ENCODE measurements at regions of chr4 and their contacts with region 1.

Region 1: DNA sequence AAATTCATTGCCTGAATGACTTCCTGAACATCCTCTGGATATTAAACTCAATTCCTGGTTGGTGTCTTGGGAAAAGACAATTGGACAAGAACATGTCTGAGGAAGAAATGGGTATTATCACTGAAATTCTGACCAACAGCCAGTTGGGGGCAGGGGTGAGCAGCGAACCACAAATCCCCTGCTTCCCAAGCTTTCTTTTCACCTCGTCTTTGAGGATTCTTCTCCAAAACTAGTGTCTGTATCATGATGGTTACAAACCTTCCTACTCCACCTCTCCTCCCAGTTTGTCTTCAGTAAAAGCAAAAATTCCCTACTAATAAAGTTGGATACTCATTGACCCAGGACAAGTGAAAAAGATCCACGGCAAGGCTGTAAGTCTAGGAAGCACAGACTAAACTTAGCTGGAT is 48.3 kb upstream of the WDR1 start:
- ATAC-seq: peak in 3 of 8 experiments; percentile 50 to 58 (median 53)
- H3K4me3 ChIP-seq: no peak overlapping the region
- H3K27ac ChIP-seq: no peak overlapping the region
- H3K4me1 ChIP-seq: no peaks in the 10 kb centered on the region

Region 2: DNA sequence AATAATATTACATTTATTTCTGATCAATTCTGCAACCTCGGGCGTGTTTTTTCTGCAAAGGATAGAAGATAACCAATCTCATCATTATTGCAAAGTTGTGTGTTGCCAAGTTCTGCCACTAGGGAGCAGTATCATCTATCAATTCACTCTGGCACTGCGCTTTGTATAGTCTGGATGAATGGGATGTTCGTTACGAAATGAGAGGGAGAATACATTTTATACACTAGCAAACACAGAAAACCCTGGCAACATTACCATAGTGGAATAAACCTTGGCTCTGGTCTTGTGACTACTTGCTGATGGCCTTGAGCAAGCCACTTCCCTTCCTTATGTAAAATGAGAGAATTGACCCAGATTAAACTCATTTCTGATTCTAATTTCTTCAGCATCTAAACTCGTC is 389.8 kb after region 1 on chr4:
- in situ Hi-C with region 1: loop called in 5 of 9 experiments (anchors 10 to 25 kb)
- ATAC-seq: peak; percentile 84 to 99 (median 96)
- H3K4me3 ChIP-seq: no peak overlapping the region
- H3K27ac ChIP-seq: no peak overlapping the region
- H3K4me1 ChIP-seq: peaks cover 0 to 2% of the 10 kb centered on the region in 2 donors

Measured in motor neuron (in vitro differentiated cells).